ENCODE measurements at regions of chr21 and their contacts with region 1.

Region 1: DNA sequence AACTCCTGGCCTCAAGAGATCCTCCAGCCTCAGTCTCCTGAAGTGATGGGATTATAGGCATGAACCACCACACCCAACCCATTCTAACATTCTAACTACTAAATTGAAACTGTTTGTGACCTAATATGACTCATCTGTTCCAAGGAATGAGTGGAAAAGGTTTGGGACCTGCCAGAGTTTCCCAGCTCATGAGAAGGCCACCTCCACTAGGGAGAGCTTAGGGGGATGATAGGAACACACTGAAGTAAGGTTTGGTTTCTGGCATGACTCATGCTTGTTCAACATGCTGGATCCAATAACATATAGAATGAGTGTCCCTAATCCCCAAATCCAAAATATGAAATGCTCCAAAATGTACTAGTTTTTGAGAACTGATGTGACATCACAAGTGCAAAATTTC is 18.9 kb upstream of the SCAF4 start:
- DNase-seq: no peak
- ATAC-seq: no peak
- H3K4me3 ChIP-seq: no peak overlapping the region
- H3K27ac ChIP-seq: no peak overlapping the region
- H3K4me1 ChIP-seq: no peaks in the 10 kb centered on the region
- H3K27me3 ChIP-seq: no peaks in the 10 kb centered on the region
- CTCF ChIP-seq: no peak

Region 2: DNA sequence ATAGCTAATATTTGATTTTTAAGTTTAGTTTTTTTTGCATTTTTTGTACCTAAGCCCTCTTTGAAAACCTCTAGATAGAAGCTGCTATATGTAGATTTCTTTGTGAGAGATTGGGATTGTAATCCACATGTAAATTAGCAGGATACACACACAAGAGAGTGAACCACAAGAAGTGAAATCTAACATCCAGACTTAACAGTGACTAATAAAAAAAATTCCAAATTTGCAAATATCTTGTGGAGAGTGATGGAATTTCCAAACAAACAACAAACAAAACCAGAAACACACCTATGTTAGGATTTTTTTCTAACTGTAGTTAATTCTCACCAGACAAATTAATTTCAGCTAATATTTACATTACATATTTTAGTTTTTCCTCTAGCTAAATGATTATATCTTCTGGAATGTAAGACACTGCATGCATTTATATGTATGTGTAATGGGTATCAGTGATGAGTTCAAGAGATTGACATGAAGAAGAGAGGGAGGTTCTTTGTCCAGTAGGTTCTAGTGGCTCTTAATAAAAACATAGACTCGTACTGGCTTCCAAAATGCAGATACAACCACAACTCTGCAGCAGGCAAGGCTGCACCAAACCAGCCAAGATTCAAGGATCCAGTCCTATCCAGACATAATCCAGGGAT is 1597.0 kb before region 1 on chr21:
- intact Hi-C with region 1: loop called in 1 of 10 experiments (anchors 5 kb)
- DNase-seq: no peak
- ATAC-seq: no peak
- H3K4me3 ChIP-seq: no peak overlapping the region
- H3K27ac ChIP-seq: no peak overlapping the region
- H3K4me1 ChIP-seq: no peaks in the 10 kb centered on the region
- H3K27me3 ChIP-seq: peaks cover 0 to 5% (median 0%) of the 10 kb centered on the region in 7 donors
- CTCF ChIP-seq: no peak

Measured in heart right ventricle (tissue), 16 donors.